CD4-positive, alpha-beta memory T cell (primary cell): ENCODE measurements at regions of chrX and their contacts with region 1.

Region 1: GRCh38 chrX:110167952-110168451 is 149.9 kb downstream of the AMMECR1 start:
- DNase-seq: peak in 4 of 5 donors; percentile 46 to 55 (median 51)
- H3K4me3 ChIP-seq: no peak overlapping the region
- H3K4me3 Mint-ChIP-seq: no peak overlapping the region
- H3K27ac ChIP-seq: no peak overlapping the region
- H3K27ac Mint-ChIP-seq: no peak overlapping the region
- H3K4me1 ChIP-seq: no peaks in the 10 kb centered on the region
- H3K4me1 Mint-ChIP-seq: peaks cover 0 to 5% (median 3%) of the 10 kb centered on the region in 4 donors
- H3K27me3 ChIP-seq: no peaks in the 10 kb centered on the region
- H3K27me3 Mint-ChIP-seq: no peaks in the 10 kb centered on the region

Region 2: DNA sequence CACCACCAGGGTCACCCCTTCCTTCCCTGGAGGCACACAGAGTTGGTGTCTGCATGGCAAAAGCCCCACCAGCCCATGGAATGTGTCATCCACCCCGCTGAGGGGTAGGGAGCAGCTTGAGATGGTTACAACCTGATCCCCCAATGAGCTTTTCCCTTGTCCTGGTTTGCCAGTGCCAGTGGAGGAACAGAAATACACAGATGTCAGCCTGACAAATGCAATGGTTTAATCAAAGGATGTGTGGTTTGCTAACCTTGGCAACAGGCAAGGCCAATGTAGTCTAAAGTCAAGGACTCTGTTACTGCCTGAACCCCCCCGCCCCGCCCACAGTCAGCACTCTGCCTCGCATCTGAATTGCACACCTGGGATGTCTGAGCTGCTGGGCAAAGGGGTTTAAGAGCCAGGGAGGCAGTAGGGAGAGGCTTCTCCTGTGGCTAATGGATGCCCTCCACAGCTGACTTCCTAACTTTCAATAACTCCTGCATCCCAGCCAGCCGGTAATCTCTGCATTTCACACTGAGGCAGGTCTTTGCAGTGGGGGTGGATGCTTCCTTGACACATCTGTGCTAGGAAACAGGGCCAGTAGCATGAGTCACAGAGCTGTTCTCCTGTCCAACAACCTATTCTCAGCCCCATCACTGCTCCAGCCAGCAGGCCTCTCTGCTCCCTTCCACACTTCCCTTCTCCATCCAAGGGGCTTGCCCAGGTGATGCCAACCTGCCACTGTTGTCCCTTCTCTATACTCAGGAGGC is 12.3 kb after region 1 on chrX:
- CTCF ChIA-PET with region 1: interaction called, 20 read pairs
- POLR2A ChIA-PET with region 1: no interaction called
- intact Hi-C with region 1: no loop called
- DNase-seq: no peak
- H3K4me3 ChIP-seq: no peak overlapping the region
- H3K4me3 Mint-ChIP-seq: no peak overlapping the region
- H3K27ac ChIP-seq: no peak overlapping the region
- H3K27ac Mint-ChIP-seq: peak overlapping the region in 3 of 7 donors; percentile 4 to 32 (median 25)
- H3K4me1 ChIP-seq: peaks cover 7% of the 10 kb centered on the region
- H3K4me1 Mint-ChIP-seq: peaks cover 8 to 20% (median 14%) of the 10 kb centered on the region in 4 donors
- H3K27me3 ChIP-seq: no peaks in the 10 kb centered on the region
- H3K27me3 Mint-ChIP-seq: no peaks in the 10 kb centered on the region

Region 3: GRCh38 chrX:110219920-110220319 is 51.9 kb after region 1 on chrX:
- CTCF ChIA-PET with region 1: interaction called, 4 read pairs
- POLR2A ChIA-PET with region 1: no interaction called
- intact Hi-C with region 1: loop called (anchors 10 kb)
- DNase-seq: no peak
- H3K4me3 ChIP-seq: no peak overlapping the region
- H3K4me3 Mint-ChIP-seq: no peak overlapping the region
- H3K27ac ChIP-seq: no peak overlapping the region
- H3K27ac Mint-ChIP-seq: no peak overlapping the region
- H3K4me1 ChIP-seq: peaks cover 40% of the 10 kb centered on the region
- H3K4me1 Mint-ChIP-seq: peaks cover 14 to 59% (median 35%) of the 10 kb centered on the region in 4 donors
- H3K27me3 ChIP-seq: no peaks in the 10 kb centered on the region
- H3K27me3 Mint-ChIP-seq: no peaks in the 10 kb centered on the region

Region 4: GRCh38 chrX:110226931-110227330 is 58.9 kb after region 1 on chrX:
- CTCF ChIA-PET with region 1: interaction called, 10 read pairs
- POLR2A ChIA-PET with region 1: interaction called, 4 read pairs
- intact Hi-C with region 1: loop called (anchors 10 kb)
- DNase-seq: no peak
- H3K4me3 ChIP-seq: no peak overlapping the region
- H3K4me3 Mint-ChIP-seq: no peak overlapping the region
- H3K27ac ChIP-seq: no peak overlapping the region
- H3K27ac Mint-ChIP-seq: peak overlapping the region in 2 of 7 donors; percentile 15 to 68
- H3K4me1 ChIP-seq: peaks cover 36% of the 10 kb centered on the region
- H3K4me1 Mint-ChIP-seq: peaks cover 25 to 52% (median 31%) of the 10 kb centered on the region in 4 donors
- H3K27me3 ChIP-seq: no peaks in the 10 kb centered on the region
- H3K27me3 Mint-ChIP-seq: no peaks in the 10 kb centered on the region

Region 5: DNA sequence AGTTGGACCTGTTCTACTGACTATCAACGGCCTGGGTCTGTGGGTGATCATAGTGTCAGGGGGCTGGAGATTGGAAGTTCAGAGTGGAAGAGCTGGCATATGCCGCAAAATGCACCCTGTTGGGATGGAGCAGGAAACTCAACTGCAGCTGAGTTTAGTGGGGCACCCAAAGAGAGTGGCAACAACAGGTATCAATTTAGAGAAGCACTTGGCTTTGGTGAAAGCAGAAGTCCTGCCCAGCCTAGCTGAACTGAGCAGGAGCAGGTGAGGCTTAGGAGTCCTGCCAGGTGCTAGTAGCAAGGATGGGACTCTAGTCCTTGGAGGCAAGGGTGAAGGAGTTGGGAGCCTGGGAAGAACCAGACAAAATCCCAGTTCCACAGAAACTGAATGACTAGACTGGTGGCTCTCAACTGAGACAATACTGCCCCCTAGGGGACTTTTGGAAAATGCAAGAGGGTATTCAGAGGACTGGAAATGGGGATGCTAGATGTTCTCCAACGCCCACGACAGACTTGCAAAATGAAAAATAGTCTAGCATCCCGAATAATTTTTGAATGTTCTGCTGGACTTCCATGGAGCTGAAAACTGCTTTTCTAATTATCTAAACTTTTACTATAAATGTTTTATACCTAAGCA is 240.0 kb after region 1 on chrX:
- CTCF ChIA-PET with region 1: interaction called, 54 read pairs
- POLR2A ChIA-PET with region 1: no interaction called
- intact Hi-C with region 1: no loop called
- DNase-seq: peak; percentile 45 to 64 (median 58)
- H3K4me3 ChIP-seq: no peak overlapping the region
- H3K4me3 Mint-ChIP-seq: no peak overlapping the region
- H3K27ac ChIP-seq: no peak overlapping the region
- H3K27ac Mint-ChIP-seq: no peak overlapping the region
- H3K4me1 ChIP-seq: no peaks in the 10 kb centered on the region
- H3K4me1 Mint-ChIP-seq: peaks cover 0 to 2% (median under 1%) of the 10 kb centered on the region in 4 donors
- H3K27me3 ChIP-seq: no peaks in the 10 kb centered on the region
- H3K27me3 Mint-ChIP-seq: peaks cover under 1 to 3% of the 10 kb centered on the region in 2 donors

Region 6: DNA sequence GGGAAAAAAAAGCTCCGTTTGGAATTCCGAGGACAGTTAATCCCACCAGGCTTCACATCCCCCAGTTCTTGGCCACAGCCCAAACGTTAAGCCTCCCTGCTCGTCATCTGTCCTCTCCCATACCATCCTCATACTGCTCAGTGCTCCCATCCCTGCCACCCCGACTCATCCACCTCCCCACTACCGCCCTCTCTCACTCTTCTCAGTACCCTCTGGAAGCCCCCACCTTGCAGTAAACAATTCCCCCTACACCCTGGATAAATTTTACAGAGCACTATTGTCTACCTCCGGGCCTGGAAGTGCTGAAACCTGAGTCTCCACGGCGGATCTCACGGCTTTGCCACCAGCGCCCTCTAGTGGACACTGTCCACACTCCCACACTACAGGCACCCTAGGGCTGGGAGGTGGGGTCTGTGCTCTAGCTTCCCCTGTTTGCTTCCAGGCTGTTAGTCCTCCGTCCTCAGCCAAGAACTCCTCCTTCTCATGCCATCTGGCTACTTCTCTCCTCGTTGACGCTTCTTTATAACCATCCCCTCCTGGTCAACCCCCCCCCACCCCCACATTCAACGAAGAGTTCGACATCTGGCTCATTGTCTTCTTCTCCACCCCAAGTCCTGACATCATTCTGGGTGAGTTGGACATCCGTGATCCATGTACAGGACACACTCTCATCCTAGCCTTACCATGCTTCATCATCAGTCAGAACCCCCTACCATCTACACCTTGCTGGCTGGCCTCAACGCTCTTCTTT is 245.1 kb after region 1 on chrX:
- CTCF ChIA-PET with region 1: interaction called, 54 read pairs
- POLR2A ChIA-PET with region 1: no interaction called
- intact Hi-C with region 1: no loop called
- DNase-seq: peak; percentile 53 to 68 (median 63)
- H3K4me3 ChIP-seq: no peak overlapping the region
- H3K4me3 Mint-ChIP-seq: no peak overlapping the region
- H3K27ac ChIP-seq: no peak overlapping the region
- H3K27ac Mint-ChIP-seq: no peak overlapping the region
- H3K4me1 ChIP-seq: no peaks in the 10 kb centered on the region
- H3K4me1 Mint-ChIP-seq: peaks cover 0 to 4% (median 2%) of the 10 kb centered on the region in 4 donors
- H3K27me3 ChIP-seq: no peaks in the 10 kb centered on the region
- H3K27me3 Mint-ChIP-seq: peaks cover 1 to 3% of the 10 kb centered on the region in 2 donors